ENCODE measurements at regions of chr2 and their contacts with region 1.

Region 1: GRCh38 chr2:147297820-147298219 is 547.0 kb upstream of the ACVR2A start:
- DNase-seq: peak; percentile 49
- H3K4me3 Mint-ChIP-seq: peak overlapping the region; percentile 36
- H3K27ac Mint-ChIP-seq: peak overlapping the region; percentile 89
- H3K4me1 Mint-ChIP-seq: peaks cover 72% of the 10 kb centered on the region
- H3K27me3 Mint-ChIP-seq: no peaks in the 10 kb centered on the region

Region 2: GRCh38 chr2:146615778-146616177 is 682.0 kb before region 1 on chr2:
- intact Hi-C with region 1: no loop called
- DNase-seq: no peak
- H3K4me3 Mint-ChIP-seq: no peak overlapping the region
- H3K27ac Mint-ChIP-seq: no peak overlapping the region
- H3K4me1 Mint-ChIP-seq: no peaks in the 10 kb centered on the region
- H3K27me3 Mint-ChIP-seq: no peaks in the 10 kb centered on the region

Region 3: GRCh38 chr2:146927080-146927711 is 370.6 kb before region 1 on chr2:
- intact Hi-C with region 1: no loop called
- DNase-seq: no peak
- H3K4me3 Mint-ChIP-seq: no peak overlapping the region
- H3K27ac Mint-ChIP-seq: no peak overlapping the region
- H3K4me1 Mint-ChIP-seq: no peaks in the 10 kb centered on the region
- H3K27me3 Mint-ChIP-seq: peaks cover 4% of the 10 kb centered on the region

Region 4: GRCh38 chr2:147231607-147232006 is 66.2 kb before region 1 on chr2:
- intact Hi-C with region 1: loop called (anchors 2 kb)
- DNase-seq: no peak
- H3K4me3 Mint-ChIP-seq: no peak overlapping the region
- H3K27ac Mint-ChIP-seq: no peak overlapping the region
- H3K4me1 Mint-ChIP-seq: peaks cover 8% of the 10 kb centered on the region
- H3K27me3 Mint-ChIP-seq: no peaks in the 10 kb centered on the region

Region 5: GRCh38 chr2:147416099-147416498 is 118.3 kb after region 1 on chr2:
- intact Hi-C with region 1: loop called (anchors 1 kb)
- DNase-seq: no peak
- H3K4me3 Mint-ChIP-seq: no peak overlapping the region
- H3K27ac Mint-ChIP-seq: peak overlapping the region; percentile 40
- H3K4me1 Mint-ChIP-seq: peaks cover 5% of the 10 kb centered on the region
- H3K27me3 Mint-ChIP-seq: peaks cover 4% of the 10 kb centered on the region

Region 6: DNA sequence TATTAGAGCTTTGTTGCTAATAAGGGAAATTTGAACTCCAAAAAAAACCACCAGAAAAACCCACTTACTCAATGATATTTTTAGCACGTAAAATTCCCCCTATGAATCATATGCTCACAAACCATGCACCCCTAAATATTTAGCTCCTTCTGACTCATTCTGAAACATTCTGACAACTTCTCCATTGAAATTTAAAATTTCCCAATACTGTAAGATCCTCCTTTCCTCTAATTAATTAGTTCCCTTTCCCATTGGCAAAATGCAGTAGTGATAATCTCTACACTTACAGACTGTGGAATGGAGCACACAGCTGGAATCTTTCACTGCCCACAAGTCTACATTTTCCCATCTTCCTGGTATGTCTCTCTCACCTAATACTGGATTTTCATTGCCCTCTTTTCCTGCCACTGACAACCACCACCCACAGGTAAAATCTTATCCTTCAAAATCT is 331.2 kb after region 1 on chr2:
- intact Hi-C with region 1: loop called (anchors 1 kb)
- DNase-seq: no peak
- H3K4me3 Mint-ChIP-seq: peak overlapping the region; percentile 35
- H3K27ac Mint-ChIP-seq: peak overlapping the region; percentile 60
- H3K4me1 Mint-ChIP-seq: peaks cover 24% of the 10 kb centered on the region
- H3K27me3 Mint-ChIP-seq: no peaks in the 10 kb centered on the region

Region 7: GRCh38 chr2:148020111-148021058 is 722.6 kb after region 1 on chr2 and contains the start of gene ORC4:
- intact Hi-C with region 1: loop called (anchors 2 kb)
- DNase-seq: peak; percentile 95
- H3K4me3 Mint-ChIP-seq: peak within 1 kb of the TSS; percentile 98
- H3K27ac Mint-ChIP-seq: peak within 1 kb of the TSS; percentile 95
- H3K4me1 Mint-ChIP-seq: peaks cover 40% of the 10 kb centered on the region
- H3K27me3 Mint-ChIP-seq: no peaks in the 10 kb centered on the region
- total RNA-seq, gene ORC4: 29.2 and 34.2 TPM in 2 replicates

Measured in activated T-helper 1 cell treated with anti-CD3 and anti-CD28 coated beads, Interleukin-12 subunit alpha, Interleukin-12 subunit beta, Interleukin-2, Interleukin-4 antibody, amounts not matched to agents 30 ng/mL and 10 ng/mL and 1 ng/mL, durations not matched to agents 14 hours and 24 hours and 36 hours (primary cell).